Breast epithelium (tissue), 4 donors: ENCODE measurements at regions of chr1 and their contacts with region 1.

Region 1: DNA sequence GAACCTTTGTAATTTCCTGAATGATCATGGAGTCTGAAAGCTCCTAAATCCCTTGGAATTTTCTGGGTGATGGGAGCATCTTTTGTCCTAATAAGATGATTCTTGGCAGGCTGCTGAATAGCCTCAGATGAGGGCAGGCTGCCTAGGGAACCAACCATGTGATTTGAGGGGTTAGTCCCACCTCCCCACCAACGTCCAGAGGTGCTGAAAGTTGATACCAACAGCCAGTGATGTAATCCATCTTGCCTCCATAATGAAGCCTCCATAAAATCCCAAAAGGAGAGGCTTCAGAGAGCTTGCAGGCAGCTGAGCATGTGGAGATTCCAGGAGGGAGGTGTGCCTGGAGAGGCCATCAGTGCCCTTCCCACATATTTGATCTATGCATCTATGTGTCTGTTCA is 43.7 kb downstream of the GTF2B start:
- DNase-seq: no peak
- H3K4me3 ChIP-seq: no peak overlapping the region
- H3K27ac ChIP-seq: no peak overlapping the region
- H3K4me1 ChIP-seq: no peaks in the 10 kb centered on the region
- H3K27me3 ChIP-seq: no peaks in the 10 kb centered on the region
- CTCF ChIP-seq: no peak
- POLR2A ChIP-seq: no peak

Region 2: GRCh38 chr1:88111806-88112205 is 735.8 kb before region 1 on chr1:
- intact Hi-C with region 1: no loop called
- DNase-seq: no peak
- H3K4me3 ChIP-seq: no peak overlapping the region
- H3K27ac ChIP-seq: no peak overlapping the region
- H3K4me1 ChIP-seq: no peaks in the 10 kb centered on the region
- H3K27me3 ChIP-seq: no peaks in the 10 kb centered on the region
- CTCF ChIP-seq: no peak
- POLR2A ChIP-seq: no peak

Region 3: DNA sequence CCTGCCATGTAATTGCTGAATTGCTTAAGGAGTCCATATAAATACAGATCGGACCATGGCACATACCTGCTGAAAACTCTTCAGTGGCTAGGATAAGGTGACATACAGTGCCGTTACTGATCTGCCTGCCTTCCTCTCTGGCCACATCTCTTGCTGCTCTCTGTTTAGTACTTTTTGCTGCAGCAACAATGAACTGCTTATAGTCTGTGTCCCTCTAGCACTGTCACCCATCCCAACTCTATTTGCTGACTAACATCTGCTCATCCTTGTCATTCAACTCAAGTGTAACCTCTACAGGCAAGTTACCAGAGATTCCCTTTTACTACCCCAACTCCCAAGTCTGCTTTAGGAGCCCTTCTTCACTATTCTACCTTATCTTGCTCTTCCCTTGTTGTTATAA is 21.9 kb before region 1 on chr1:
- intact Hi-C with region 1: no loop called
- DNase-seq: no peak
- H3K4me3 ChIP-seq: no peak overlapping the region
- H3K27ac ChIP-seq: no peak overlapping the region
- H3K4me1 ChIP-seq: no peaks in the 10 kb centered on the region
- H3K27me3 ChIP-seq: no peaks in the 10 kb centered on the region
- CTCF ChIP-seq: no peak
- POLR2A ChIP-seq: no peak

Region 4: GRCh38 chr1:88867743-88868521 is 20.3 kb after region 1 on chr1:
- intact Hi-C with region 1: loop called (anchors 1 kb)
- DNase-seq: no peak
- H3K4me3 ChIP-seq: no peak overlapping the region
- H3K27ac ChIP-seq: no peak overlapping the region
- H3K4me1 ChIP-seq: no peaks in the 10 kb centered on the region
- H3K27me3 ChIP-seq: no peaks in the 10 kb centered on the region
- CTCF ChIP-seq: no peak
- POLR2A ChIP-seq: no peak